A549 (cell line): ENCODE measurements at regions of chr12 and their contacts with region 1.

Region 1: GRCh38 chr12:6470375-6471163 is at the start of gene VAMP1:
- DNase-seq: peak; percentile 98
- ATAC-seq: peak; percentile 95 to 96
- H3K4me3 ChIP-seq: peak within 1 kb of the TSS; percentile 68
- H3K27ac ChIP-seq: peak within 1 kb of the TSS; percentile 81 to 90
- H3K4me1 ChIP-seq: peaks cover 38% of the 10 kb centered on the region
- CTCF ChIP-seq: no peak
- EP300 ChIP-seq: no peak
- POLR2A ChIP-seq: peak; percentile 100
- RAD21 ChIP-seq: no peak
- polyA plus RNA-seq, gene VAMP1: 17.6 and 28.8 TPM in 2 replicates

Region 2: GRCh38 chr12:6330192-6330591 is 140.4 kb before region 1 on chr12:
- CTCF ChIA-PET with region 1: interaction called, 73 read pairs
- POLR2A ChIA-PET with region 1: interaction called, 15 read pairs
- DNase-seq: no peak
- ATAC-seq: no peak
- H3K4me3 ChIP-seq: no peak overlapping the region
- H3K27ac ChIP-seq: peak overlapping the region; percentile 95 to 98; a peak in 5 of 6 replicates
- H3K4me1 ChIP-seq: peaks cover 100% of the 10 kb centered on the region
- CTCF ChIP-seq: no peak
- EP300 ChIP-seq: no peak
- POLR2A ChIP-seq: no peak
- RAD21 ChIP-seq: no peak

Region 3: GRCh38 chr12:6376079-6376869 is 94.3 kb before region 1 on chr12:
- CTCF ChIA-PET with region 1: interaction called, 11 read pairs
- POLR2A ChIA-PET with region 1: interaction called, 17 read pairs
- DNase-seq: peak; percentile 78 to 86
- ATAC-seq: peak; percentile 73 to 77
- H3K4me3 ChIP-seq: no peak overlapping the region
- H3K27ac ChIP-seq: peak overlapping the region; percentile 97 to 99
- H3K4me1 ChIP-seq: peaks cover 71% of the 10 kb centered on the region
- CTCF ChIP-seq: peak; percentile 27
- EP300 ChIP-seq: no peak
- POLR2A ChIP-seq: no peak
- RAD21 ChIP-seq: peak in 1 of 2 experiments; percentile 26; a peak in 3 of 5 replicates

Region 4: DNA sequence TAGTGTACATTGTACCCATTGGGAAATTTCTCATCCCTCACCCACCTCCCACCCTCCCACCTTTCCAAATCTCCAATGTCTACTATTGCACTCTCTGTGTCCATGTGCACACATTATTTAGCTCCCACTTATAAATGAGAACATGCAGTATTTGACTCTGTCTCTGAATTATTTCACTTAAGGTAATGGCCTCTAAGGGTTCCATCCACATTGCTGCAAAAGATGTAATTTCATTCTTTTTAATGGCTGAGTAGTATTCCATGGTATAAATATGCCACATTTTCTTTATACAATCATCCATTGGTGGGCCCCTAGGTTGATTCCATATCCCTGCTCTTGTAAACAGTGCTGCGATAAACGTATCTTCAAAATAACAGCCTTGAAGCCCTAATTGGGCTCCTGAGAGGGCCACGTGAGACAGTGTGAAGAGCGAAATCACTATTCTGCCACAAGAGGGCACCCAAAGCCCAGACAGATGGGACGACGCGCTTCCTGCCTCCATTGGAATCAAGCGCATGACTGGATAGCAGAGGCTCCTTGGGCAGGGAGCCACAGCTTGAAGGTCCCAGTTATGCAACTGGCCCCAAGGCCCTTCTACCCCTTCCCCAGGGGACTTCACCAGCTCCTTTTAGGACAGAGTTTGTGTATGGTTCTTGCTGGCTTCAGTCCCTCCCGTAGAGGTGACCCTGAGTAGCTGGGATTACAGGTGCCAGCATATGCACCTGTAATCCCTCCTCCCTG is 47.1 kb before region 1 on chr12:
- CTCF ChIA-PET with region 1: interaction called, 121 read pairs
- POLR2A ChIA-PET with region 1: interaction called, 9 read pairs
- DNase-seq: peak; percentile 87 to 93
- ATAC-seq: peak; percentile 91 to 95
- H3K4me3 ChIP-seq: no peak overlapping the region
- H3K27ac ChIP-seq: peak overlapping the region; percentile 42 to 76; a peak in 4 of 6 replicates
- H3K4me1 ChIP-seq: peaks cover 26% of the 10 kb centered on the region
- CTCF ChIP-seq: peak; percentile 95
- EP300 ChIP-seq: no peak
- POLR2A ChIP-seq: no peak
- RAD21 ChIP-seq: peak; percentile 98

Region 5: GRCh38 chr12:6488240-6488639 is 17.7 kb after region 1 on chr12:
- CTCF ChIA-PET with region 1: interaction called, 28 read pairs
- POLR2A ChIA-PET with region 1: interaction called, 34 read pairs
- DNase-seq: no peak
- ATAC-seq: no peak
- H3K4me3 ChIP-seq: no peak overlapping the region
- H3K27ac ChIP-seq: no peak overlapping the region
- H3K4me1 ChIP-seq: peaks cover 7% of the 10 kb centered on the region; the same call in 2 of the 3 replicates
- CTCF ChIP-seq: no peak
- EP300 ChIP-seq: no peak
- POLR2A ChIP-seq: no peak
- RAD21 ChIP-seq: no peak

Region 6: DNA sequence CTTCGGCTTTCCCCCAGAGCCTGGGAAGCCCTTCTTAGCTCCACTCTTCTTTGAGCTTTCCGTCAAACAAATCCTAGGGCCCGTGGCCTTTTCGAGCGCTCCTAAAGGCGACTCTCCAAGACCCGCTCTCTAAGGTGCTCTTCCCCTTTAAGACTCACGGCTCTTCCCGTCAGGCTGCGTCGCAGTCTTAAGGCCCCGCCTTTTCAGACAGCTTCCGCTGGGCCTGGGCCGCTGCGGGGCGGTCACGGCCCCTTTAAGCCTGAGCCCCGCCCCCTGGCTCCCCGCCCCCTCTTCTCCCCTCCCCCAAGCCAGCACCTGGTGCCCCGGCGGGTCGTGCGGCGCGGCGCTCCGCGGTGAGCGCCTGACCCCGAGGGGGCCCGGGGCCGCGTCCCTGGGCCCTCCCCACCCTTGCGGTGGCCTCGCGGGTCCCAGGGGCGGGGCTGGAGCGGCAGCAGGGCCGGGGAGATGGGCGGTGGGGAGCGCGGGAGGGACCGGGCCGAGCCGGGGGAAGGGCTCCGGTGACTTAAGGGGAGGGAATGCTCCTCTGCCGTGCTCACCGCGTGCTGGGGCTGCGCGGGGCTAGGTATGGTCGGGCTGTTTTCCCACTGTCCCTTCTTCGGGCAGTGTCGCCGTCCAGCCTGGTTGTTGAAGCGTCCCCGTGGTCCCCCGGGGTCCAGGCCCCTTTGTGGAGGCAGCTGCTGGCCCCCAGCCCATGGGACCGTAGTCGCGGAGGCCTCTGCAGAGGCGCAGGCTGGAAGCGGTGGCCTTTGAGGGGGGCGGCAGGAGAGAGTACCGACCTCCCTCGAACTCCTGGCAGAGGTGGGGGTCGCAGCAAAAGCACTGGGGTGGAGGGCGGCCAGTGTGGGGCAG is 719.1 kb after region 1 on chr12 and contains the start of gene PEX5:
- CTCF ChIA-PET with region 1: no interaction called
- POLR2A ChIA-PET with region 1: no interaction called
- DNase-seq: peak; percentile 89 to 96
- ATAC-seq: peak; percentile 93 to 97
- H3K4me3 ChIP-seq: peak within 1 kb of the TSS; percentile 92
- H3K27ac ChIP-seq: peak within 1 kb of the TSS; percentile 73 to 94
- H3K4me1 ChIP-seq: peaks cover 19% of the 10 kb centered on the region; the same call in 2 of the 3 replicates
- CTCF ChIP-seq: no peak
- EP300 ChIP-seq: no peak
- POLR2A ChIP-seq: peak; percentile 36
- RAD21 ChIP-seq: no peak
- polyA plus RNA-seq, gene PEX5: 21.5 and 27.3 TPM in 2 replicates